IMR-90 (cell line): ENCODE measurements at regions of chr3 and their contacts with region 1.

Region 1: GRCh38 chr3:42581709-42582473 is at the start of gene SEC22C:
- DNase-seq: peak; percentile 84
- ATAC-seq: peak; percentile 98
- H3K4me3 ChIP-seq: peak within 1 kb of the TSS; percentile 95
- H3K27ac ChIP-seq: peak within 1 kb of the TSS; percentile 64
- H3K4me1 ChIP-seq: peaks cover 2% of the 10 kb centered on the region; the same call in 1 of the 2 replicates
- H3K27me3 ChIP-seq: no peaks in the 10 kb centered on the region
- CTCF ChIP-seq: peak; percentile 23; the same call in 1 of the 2 replicates
- POLR2A ChIP-seq: peak; percentile 67; the same call in 1 of the 2 replicates
- RAD21 ChIP-seq: 0 out of 2 replicates have a peak, but pooled peaks have one; percentile 11
- total RNA-seq, gene SEC22C: 43.9 and 46.9 TPM in 2 replicates

Region 2: DNA sequence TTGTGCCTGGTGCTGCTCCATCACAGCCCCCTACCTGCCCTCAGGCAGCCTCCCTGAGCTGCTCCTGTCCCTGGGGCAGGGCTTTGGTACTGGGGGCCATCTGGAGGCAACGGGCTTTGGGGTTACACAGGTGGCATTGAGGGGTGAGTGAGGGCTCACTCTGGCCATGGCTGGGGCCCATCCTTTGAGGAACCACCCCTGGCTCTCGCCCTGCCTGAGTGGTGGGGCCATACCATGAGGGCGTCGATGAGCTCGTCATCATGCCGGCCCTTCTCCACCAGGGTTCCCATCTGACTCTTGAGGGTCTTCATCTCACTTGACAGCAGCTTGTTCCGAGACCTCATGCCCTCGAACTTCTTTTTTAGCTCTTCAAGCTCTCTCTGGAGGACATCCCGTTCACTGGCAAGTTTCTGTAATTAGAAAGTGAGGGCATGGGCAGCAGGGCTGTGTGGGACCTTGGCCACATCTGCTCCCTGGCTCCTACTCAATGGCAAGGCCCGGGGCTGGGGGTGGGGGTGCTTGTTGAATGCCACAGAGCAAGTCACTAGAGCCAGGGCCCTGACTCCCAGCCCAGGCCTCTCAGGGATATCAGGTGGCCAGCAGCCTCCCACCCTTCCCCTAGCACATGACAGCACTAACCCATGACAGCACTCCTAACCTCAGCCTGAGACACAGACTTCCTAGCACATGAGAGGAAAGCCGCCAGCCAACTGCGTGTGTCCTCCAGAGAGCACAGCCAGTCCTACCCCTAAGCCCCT is 157.7 kb after region 1 on chr3:
- CTCF ChIA-PET with region 1: no interaction called
- POLR2A ChIA-PET with region 1: no interaction called
- dilution Hi-C with region 1: no loop called
- in situ Hi-C with region 1: no loop called
- intact Hi-C with region 1: loop called (anchors 5 kb)
- DNase-seq: no peak
- ATAC-seq: no peak
- H3K4me3 ChIP-seq: no peak overlapping the region
- H3K27ac ChIP-seq: no peak overlapping the region
- H3K4me1 ChIP-seq: no peaks in the 10 kb centered on the region
- H3K27me3 ChIP-seq: peaks cover 28% of the 10 kb centered on the region
- CTCF ChIP-seq: no peak
- POLR2A ChIP-seq: no peak
- RAD21 ChIP-seq: no peak

Region 3: DNA sequence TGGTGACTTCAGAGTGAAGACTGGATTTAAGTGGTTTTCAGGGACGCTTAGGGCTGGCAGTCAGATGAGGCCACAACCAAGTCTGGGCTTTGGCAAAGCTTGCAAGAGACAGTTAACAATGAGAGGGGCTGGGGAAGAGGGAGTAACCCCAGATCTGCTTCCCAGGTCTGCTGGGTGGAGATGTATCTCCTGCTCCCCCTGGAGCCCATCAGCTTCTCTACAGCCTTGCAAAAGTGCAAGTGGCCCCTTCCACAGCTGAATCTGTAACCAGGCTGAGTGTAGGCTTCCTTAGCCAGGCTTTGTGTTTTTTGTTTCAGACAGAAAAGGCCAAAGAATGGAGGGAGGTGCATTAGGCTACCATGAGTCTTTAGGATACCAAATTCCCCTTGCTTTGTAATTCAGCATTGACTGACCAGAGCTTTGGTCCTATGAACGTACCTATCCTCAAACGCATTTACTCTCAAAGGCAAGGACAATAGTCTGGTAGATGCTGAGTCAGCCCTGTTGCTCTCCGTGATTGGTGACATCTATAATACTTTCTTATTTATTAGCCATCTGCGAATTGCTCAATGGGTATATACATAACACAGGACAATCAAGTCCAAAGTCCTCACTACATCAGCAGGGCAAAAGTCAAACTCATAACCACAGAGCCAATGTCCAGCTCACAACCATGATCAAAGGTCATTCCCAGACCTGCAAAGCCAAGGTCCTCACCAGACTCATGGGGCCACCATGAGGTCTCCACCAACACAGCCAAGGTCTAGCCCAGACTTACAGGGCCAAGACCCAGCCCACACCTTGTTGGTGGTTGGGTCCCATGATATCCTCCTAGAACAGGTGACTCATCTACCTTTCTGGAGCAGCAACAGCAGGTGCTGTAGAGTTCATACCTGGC is 174.0 kb after region 1 on chr3:
- CTCF ChIA-PET with region 1: no interaction called
- POLR2A ChIA-PET with region 1: no interaction called
- dilution Hi-C with region 1: no loop called
- in situ Hi-C with region 1: no loop called
- intact Hi-C with region 1: no loop called
- DNase-seq: peak; percentile 35
- ATAC-seq: peak; percentile 93
- H3K4me3 ChIP-seq: no peak overlapping the region
- H3K27ac ChIP-seq: no peak overlapping the region
- H3K4me1 ChIP-seq: no peaks in the 10 kb centered on the region
- H3K27me3 ChIP-seq: peaks cover 9% of the 10 kb centered on the region
- CTCF ChIP-seq: peak; percentile 48
- POLR2A ChIP-seq: no peak
- RAD21 ChIP-seq: peak; percentile 45